Dorsolateral prefrontal cortex (tissue), 120 donors: ENCODE measurements at regions of chr16 and their contacts with region 1.

Region 1: GRCh38 chr16:15055141-15056053 is 477 bp downstream of the NTAN1 start:
- DNase-seq: peak in 5 of 10 donors; percentile 22 to 61 (median 40)
- H3K4me3 ChIP-seq: peak overlapping the region; percentile 71 to 100 (median 97)
- H3K27ac ChIP-seq: peak overlapping the region in 52 of 59 donors; percentile 10 to 93 (median 73)
- H3K27me3 ChIP-seq: no peaks in the 10 kb centered on the region
- CTCF ChIP-seq: no peak

Region 2: GRCh38 chr16:14965328-14965727 is 90.1 kb before region 1 on chr16:
- intact Hi-C with region 1: loop called in 1 of 2 experiments (anchors 5 kb)
- DNase-seq: no peak
- H3K4me3 ChIP-seq: no peak overlapping the region
- H3K27ac ChIP-seq: no peak overlapping the region
- H3K27me3 ChIP-seq: no peaks in the 10 kb centered on the region
- CTCF ChIP-seq: no peak